ENCODE measurements at regions of chr19 and their contacts with region 1.

Region 1: DNA sequence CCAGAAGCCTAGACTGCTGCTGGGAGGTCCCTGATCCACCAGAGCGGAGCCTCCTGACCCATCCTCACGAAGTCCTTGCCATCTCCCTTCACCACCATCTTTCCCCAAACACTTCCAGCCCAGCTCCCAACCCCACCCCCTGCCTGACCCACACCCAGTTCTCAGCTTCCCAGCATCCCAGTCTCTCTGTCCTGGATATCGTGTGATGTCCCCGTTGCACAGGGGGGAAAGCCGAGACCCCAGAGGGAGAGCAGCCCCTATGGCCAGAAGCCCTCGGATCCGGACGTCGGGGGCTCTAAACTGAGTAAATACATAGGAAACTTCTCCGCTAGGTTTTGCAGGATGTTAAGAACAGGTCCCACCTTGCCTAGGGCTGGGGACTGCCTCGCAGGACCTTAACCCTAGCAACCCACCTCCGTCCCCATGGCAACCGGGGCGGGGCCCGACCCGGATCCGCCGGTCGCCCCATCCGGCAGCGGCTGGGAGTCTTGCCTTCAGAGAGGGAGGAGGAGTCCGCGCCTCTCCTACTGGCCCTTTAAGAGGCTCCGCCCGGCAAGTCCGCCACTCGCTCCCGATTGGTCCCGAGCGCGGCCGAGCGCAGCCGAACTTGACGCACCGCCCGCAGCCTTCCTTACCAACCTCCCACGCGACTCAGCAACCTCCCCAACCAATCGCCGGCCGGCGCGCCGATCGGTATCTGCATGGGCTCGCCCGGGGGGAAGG is 451 bp upstream of the HMG20B start:
- DNase-seq: peak; percentile 99
- H3K4me3 Mint-ChIP-seq: peak overlapping the region; percentile 77
- H3K27ac Mint-ChIP-seq: peak overlapping the region; percentile 75
- H3K4me1 Mint-ChIP-seq: no peaks in the 10 kb centered on the region
- H3K27me3 Mint-ChIP-seq: peaks cover 2% of the 10 kb centered on the region

Region 2: DNA sequence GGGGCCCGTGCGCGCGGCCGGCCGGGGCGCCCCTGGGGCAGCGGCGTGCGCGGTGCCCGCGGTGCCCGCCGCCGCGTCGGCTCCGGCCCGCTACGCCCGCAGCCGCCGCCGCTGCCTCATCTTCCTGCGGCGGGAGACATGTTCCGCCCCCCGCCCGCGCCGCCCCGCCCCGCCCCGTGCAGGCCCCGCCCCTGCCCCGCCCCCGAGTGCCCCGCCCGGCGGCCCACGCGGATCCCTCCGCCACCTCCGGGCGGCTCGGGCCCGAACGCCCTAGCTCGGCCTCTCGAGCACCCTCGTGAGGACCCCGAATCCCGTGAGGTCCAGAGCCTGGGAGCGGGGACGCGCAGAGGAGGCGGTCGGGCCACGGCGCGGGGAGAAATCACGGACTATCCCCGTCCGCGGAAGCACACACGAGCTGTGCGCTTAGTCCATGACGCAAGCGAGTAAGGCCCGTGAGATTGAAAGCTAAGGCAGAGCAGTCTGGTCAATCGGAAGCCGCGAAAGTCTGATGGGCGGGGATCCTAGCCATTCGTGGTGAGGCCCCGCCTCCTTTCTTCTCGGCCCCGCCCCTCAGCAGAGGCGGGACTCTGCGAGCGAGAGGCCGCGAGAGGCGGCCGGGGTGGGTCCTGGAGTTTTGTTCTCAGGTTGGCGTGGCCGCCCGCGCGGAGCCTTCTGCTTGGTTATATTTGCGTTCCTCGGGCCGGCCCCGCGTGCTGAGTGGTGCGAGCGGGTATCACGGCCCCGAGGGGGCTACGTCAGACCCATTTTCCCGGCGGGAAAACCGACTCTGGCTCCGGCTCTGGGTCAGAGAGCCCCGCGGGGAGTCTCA is 1919.6 kb before region 1 on chr19 and contains the start of gene TCF3:
- intact Hi-C with region 1: loop called (anchors 5 kb)
- DNase-seq: peak; percentile 98
- H3K4me3 Mint-ChIP-seq: peak within 1 kb of the TSS; percentile 95
- H3K27ac Mint-ChIP-seq: peak within 1 kb of the TSS; percentile 97
- H3K4me1 Mint-ChIP-seq: peaks cover 16% of the 10 kb centered on the region
- H3K27me3 Mint-ChIP-seq: peaks cover 1% of the 10 kb centered on the region
- total RNA-seq, gene TCF3: 163 and 172 TPM in 2 replicates

Region 3: GRCh38 chr19:3275583-3276340 is 296.5 kb before region 1 on chr19:
- intact Hi-C with region 1: loop called (anchors 2 kb)
- DNase-seq: peak; percentile 76
- H3K4me3 Mint-ChIP-seq: peak overlapping the region; percentile 78
- H3K27ac Mint-ChIP-seq: peak overlapping the region; percentile 75
- H3K4me1 Mint-ChIP-seq: peaks cover 8% of the 10 kb centered on the region
- H3K27me3 Mint-ChIP-seq: peaks cover 11% of the 10 kb centered on the region

Region 4: DNA sequence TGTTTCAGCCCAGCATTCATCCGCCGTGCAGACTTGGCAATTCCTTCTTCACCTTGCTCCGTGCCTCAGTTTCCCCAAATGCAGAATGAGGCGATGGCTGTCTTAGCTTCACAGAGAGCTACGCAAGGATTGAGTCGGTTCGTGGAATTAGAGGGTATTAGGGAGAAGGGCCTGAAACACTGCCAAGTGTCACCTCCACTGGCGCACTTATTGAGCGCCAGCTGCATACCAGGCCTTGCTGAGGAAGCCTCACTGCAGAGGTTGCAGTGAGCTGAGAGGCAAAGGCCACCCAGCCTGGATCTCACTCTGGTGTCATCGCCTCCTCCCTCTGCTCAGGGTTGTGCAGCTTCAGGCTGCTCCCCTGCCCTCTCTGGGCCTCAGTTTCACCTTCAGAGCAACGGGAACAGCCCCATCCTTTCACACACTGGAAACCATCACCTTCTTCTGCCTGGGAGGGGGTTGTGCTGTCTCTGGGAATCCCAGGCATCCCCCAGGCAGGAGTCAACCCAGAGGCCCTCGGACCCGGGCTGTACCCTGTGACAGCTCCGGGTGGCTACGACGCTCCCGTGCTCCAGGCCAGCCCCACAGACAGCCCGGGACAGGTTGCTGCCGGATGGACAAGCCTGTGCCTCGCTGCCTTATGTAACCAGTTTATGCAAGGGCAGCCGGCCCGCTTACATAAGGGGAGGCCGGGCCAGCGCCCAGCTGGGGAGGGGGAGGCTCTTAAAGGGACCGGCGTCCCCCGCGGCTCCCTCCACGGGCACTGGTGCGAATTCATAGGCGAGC is 174.0 kb before region 1 on chr19:
- intact Hi-C with region 1: no loop called
- DNase-seq: no peak
- H3K4me3 Mint-ChIP-seq: no peak overlapping the region
- H3K27ac Mint-ChIP-seq: no peak overlapping the region
- H3K4me1 Mint-ChIP-seq: no peaks in the 10 kb centered on the region
- H3K27me3 Mint-ChIP-seq: no peaks in the 10 kb centered on the region

Region 5: DNA sequence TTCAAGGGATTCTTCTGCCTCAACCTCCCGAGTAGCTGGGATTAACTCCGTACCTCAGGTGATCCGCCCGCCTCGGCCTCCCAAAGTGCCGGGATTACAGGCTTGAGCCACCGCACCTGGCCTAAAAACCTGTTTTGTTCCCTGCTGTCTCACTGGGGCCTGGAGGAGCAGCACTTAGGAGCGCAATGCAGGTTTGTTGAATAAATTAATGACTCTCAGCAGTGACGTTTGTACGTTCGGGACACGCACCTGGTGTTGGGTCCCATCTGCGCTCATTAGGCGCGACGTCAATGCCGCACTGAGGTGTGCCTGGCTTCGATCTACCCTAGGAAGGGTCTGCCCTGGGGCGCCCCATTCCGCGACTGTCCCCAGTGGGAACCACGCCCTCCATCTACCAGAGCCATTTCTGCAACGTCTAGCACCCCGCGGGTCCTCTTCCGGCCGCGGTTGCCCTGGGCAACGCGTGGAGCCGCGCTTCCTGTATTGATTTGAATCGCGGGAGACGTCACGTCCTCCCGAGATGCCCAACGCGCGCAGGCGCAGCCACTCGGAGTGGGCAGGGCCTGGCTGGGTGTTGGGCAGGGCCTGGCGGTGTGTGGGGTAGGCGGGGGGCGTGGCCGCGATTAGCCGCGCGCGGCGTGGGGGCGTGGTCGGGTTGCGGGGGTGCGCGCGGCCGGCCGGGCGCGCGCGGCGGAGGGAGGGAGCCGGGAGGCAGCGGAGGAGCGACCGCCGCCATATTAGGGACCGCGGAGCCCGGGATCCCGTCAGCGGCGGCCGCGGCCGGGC is 66.5 kb before region 1 on chr19 and contains the start of gene FZR1:
- intact Hi-C with region 1: loop called (anchors 1 kb)
- DNase-seq: peak; percentile 100
- H3K4me3 Mint-ChIP-seq: peak within 1 kb of the TSS; percentile 93
- H3K27ac Mint-ChIP-seq: peak within 1 kb of the TSS; percentile 97
- H3K4me1 Mint-ChIP-seq: peaks cover 43% of the 10 kb centered on the region
- H3K27me3 Mint-ChIP-seq: no peaks in the 10 kb centered on the region
- total RNA-seq, gene FZR1: 41.1 and 45.3 TPM in 2 replicates

Region 6: GRCh38 chr19:3516675-3517207 is 55.6 kb before region 1 on chr19:
- intact Hi-C with region 1: no loop called
- DNase-seq: no peak
- H3K4me3 Mint-ChIP-seq: no peak overlapping the region
- H3K27ac Mint-ChIP-seq: no peak overlapping the region
- H3K4me1 Mint-ChIP-seq: peaks cover 9% of the 10 kb centered on the region
- H3K27me3 Mint-ChIP-seq: no peaks in the 10 kb centered on the region

Region 7: GRCh38 chr19:3626473-3627350 is 54.4 kb after region 1 on chr19 and contains the start of gene CACTIN:
- intact Hi-C with region 1: loop called (anchors 1 kb)
- DNase-seq: peak; percentile 98
- H3K4me3 Mint-ChIP-seq: peak within 1 kb of the TSS; percentile 89
- H3K27ac Mint-ChIP-seq: peak within 1 kb of the TSS; percentile 97
- H3K4me1 Mint-ChIP-seq: peaks cover 13% of the 10 kb centered on the region
- H3K27me3 Mint-ChIP-seq: no peaks in the 10 kb centered on the region
- total RNA-seq, gene CACTIN: 37.2 and 40.8 TPM in 2 replicates

Region 8: GRCh38 chr19:3984908-3985642 is 412.8 kb after region 1 on chr19 and contains the start of gene EEF2:
- intact Hi-C with region 1: loop called (anchors 2 kb)
- DNase-seq: peak; percentile 87
- H3K4me3 Mint-ChIP-seq: peak within 1 kb of the TSS; percentile 93
- H3K27ac Mint-ChIP-seq: peak within 1 kb of the TSS; percentile 91
- H3K4me1 Mint-ChIP-seq: peaks cover 43% of the 10 kb centered on the region
- H3K27me3 Mint-ChIP-seq: peaks cover 2% of the 10 kb centered on the region
- total RNA-seq, gene EEF2: 2,359 TPM in 2 replicates

Measured in activated T-helper 1 cell treated with anti-CD3 and anti-CD28 coated beads, Interleukin-12 subunit alpha, Interleukin-12 subunit beta, Interleukin-2, Interleukin-4 antibody, amounts not matched to agents 30 ng/mL and 10 ng/mL and 1 ng/mL, durations not matched to agents 14 hours and 24 hours and 36 hours (primary cell).